Activated CD4-positive, alpha-beta memory T cell treated with anti-CD3 and anti-CD28 coated beads, Interleukin-2, amount 10 ng/mL, durations not matched to agents 7 days and 5 days (primary cell): ENCODE measurements at regions of chr10 and their contacts with region 1.

Region 1: DNA sequence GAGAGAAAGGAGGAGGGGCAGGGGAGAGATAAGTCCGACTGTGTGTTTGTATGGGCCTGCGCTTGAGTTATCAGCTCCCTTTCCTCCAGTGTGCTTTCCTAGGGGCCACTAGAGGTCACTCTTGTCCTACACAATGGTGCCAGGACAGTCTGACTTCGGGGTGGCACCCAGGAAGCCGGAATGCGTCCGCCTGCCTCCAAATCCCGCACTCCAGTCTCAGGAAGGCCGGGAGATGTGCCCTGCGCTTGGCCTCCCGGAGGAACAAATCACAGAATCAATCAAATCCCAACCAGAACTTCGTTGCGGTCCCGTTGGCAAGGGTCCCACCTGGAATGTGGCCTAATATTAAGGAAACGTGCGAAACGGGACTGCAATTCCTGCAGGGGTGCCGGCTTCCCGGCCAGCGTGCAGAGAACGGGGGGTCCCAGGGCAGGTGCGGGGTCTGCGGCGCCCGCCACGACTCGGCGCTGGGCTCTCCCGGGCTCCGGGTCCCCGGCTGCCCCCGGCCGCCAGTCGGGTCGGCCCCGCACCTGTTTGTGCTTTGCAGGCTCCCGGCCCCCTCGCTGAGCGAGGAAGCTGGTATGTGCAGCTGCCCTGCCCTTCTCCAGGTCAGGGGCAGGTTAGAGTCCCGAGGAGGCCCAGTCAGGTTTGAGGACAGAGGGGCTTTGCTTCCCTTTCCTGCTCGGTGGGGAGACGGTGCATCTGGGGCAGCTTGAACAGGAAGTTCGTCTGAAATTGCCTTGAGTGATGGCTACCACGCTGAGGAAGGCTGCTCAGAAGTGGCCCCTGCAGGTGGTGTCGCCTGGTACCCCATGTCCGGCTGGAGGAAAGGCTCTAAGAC is 21.0 kb upstream of the HPS1 start:
- DNase-seq: peak; percentile 68
- H3K4me3 Mint-ChIP-seq: peak overlapping the region; percentile 82
- H3K27ac Mint-ChIP-seq: no peak overlapping the region
- H3K4me1 Mint-ChIP-seq: peaks cover 11% of the 10 kb centered on the region
- H3K27me3 Mint-ChIP-seq: peaks cover 29% of the 10 kb centered on the region

Region 2: GRCh38 chr10:98478430-98479222 is 10.9 kb after region 1 on chr10:
- CTCF ChIA-PET with region 1: interaction called, 16 read pairs
- POLR2A ChIA-PET with region 1: no interaction called
- DNase-seq: no peak
- H3K4me3 Mint-ChIP-seq: no peak overlapping the region
- H3K27ac Mint-ChIP-seq: no peak overlapping the region
- H3K4me1 Mint-ChIP-seq: peaks cover 4% of the 10 kb centered on the region
- H3K27me3 Mint-ChIP-seq: peaks cover 5% of the 10 kb centered on the region

Region 3: DNA sequence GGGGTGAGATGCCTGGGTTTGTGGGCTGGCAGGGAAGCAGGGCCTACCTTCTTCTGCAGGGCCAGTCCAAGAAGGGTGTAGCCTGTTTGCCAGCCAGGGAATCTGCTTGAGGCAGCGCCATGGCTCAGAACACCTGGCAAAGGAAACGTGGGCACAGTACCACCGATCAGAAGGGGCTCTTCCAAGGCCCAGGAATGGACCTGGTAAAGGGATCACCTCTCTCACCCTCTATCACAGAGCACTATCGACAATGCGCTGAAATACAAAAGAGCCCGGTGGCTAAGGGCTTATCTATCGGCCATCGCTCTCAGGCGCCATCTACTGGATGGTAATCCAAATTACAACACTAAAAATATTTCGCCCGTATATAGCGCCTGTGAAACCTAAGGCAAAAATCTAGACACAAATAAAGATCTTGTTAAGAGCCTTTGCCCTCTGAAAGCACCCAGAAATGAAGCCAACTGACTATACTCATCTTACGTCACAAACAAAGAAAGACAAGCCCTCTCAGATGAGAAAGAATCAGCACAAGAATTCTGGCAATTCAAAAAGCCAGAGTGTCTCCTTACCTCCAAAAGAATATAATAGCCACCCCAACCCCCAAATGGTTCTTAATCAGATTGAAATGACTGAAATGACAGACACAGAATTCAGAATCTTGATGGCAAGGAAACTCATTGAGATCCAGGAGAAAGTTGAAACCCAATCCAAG is 196.8 kb after region 1 on chr10:
- CTCF ChIA-PET with region 1: interaction called, 28 read pairs
- POLR2A ChIA-PET with region 1: no interaction called
- DNase-seq: peak; percentile 42
- H3K4me3 Mint-ChIP-seq: no peak overlapping the region
- H3K27ac Mint-ChIP-seq: no peak overlapping the region
- H3K4me1 Mint-ChIP-seq: no peaks in the 10 kb centered on the region
- H3K27me3 Mint-ChIP-seq: peaks cover 29% of the 10 kb centered on the region

Region 4: GRCh38 chr10:99248824-99249223 is 781.1 kb after region 1 on chr10:
- CTCF ChIA-PET with region 1: interaction called, 19 read pairs
- POLR2A ChIA-PET with region 1: no interaction called
- DNase-seq: no peak
- H3K4me3 Mint-ChIP-seq: no peak overlapping the region
- H3K27ac Mint-ChIP-seq: no peak overlapping the region
- H3K4me1 Mint-ChIP-seq: no peaks in the 10 kb centered on the region
- H3K27me3 Mint-ChIP-seq: no peaks in the 10 kb centered on the region